Activated CD4-positive, alpha-beta T cell treated with anti-CD3 and anti-CD28 coated beads, Interleukin-2, amount 10 ng/mL, durations not matched to agents 24 days and 14 days (primary cell): ENCODE measurements at regions of chr19 and their contacts with region 1.

Region 1: DNA sequence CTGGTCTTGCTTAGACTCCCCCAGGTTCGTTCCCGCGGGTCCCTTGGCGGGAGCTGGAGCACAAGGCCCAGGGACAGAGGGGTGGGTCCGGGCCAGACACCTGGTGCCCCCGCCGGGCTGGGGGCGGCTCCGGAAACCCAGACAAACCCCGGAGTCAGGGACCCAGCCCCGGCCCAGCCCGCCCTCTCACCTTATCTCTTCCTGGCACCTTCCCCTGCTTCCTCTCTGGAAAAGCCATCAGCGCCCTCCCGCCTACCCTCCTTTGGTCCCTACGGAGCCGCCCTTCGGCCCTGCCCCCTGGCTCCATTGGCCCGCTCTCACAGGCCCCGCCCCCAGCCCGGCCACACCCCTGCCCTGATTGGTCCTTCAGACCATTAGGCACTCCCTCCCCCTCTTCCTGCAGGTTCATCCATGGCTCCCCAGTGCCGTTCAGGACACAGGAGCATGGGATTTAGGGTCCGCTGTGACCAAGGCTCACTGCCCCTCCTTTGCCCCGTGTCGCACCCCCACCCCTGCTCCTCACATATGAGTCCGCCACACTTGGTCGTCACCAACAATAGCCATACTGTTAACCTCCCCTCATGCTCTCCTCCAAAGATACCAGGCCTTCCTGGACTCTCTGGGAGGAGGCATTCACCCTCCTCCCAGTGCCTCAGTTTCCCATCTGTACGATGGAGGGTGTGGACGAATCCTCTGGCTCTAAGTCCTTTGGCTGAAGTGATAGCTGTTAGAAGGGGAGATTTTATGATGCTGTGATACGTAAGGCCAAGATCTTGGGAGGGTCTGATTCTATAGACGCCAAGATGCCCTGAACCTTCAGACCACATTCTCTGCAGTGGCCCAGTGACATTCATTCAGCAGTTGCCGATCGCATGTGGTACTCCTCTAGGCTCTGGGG is 15.1 kb upstream of the NOP53 start:
- DNase-seq: peak; percentile 88
- H3K4me3 Mint-ChIP-seq: peak overlapping the region; percentile 91
- H3K27ac Mint-ChIP-seq: peak overlapping the region; percentile 78
- H3K4me1 Mint-ChIP-seq: peaks cover 21% of the 10 kb centered on the region
- H3K27me3 Mint-ChIP-seq: peaks cover 1% of the 10 kb centered on the region

Region 2: GRCh38 chr19:47512183-47512947 is 217.9 kb before region 1 on chr19:
- intact Hi-C with region 1: no loop called
- DNase-seq: peak; percentile 79
- H3K4me3 Mint-ChIP-seq: peak overlapping the region; percentile 99
- H3K27ac Mint-ChIP-seq: peak overlapping the region; percentile 79
- H3K4me1 Mint-ChIP-seq: peaks cover 65% of the 10 kb centered on the region
- H3K27me3 Mint-ChIP-seq: no peaks in the 10 kb centered on the region

Region 3: DNA sequence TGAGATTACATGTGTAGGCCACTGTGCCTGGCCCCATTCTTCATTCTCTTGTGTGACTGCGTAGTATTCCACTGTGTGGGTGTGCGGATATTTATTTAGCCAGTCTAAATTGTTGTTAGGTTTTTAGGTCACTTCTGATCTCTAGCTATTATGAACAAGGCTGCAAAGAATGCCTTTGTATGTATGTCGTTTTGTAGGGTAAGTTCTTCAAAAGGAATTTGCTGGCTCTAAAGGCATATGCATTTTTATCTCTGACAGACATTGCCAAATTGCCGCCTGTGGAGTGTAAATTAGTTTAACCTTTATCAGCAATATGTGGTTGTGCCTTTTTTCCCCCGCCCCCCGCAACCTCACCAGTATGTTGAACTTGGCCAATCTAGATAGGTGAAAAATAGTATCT is 47.3 kb before region 1 on chr19:
- intact Hi-C with region 1: no loop called
- DNase-seq: no peak
- H3K4me3 Mint-ChIP-seq: no peak overlapping the region
- H3K27ac Mint-ChIP-seq: peak overlapping the region; percentile 34
- H3K4me1 Mint-ChIP-seq: no peaks in the 10 kb centered on the region
- H3K27me3 Mint-ChIP-seq: no peaks in the 10 kb centered on the region

Region 4: GRCh38 chr19:47742634-47743033 is 12.4 kb after region 1 on chr19:
- intact Hi-C with region 1: loop called (anchors 2 kb)
- DNase-seq: no peak
- H3K4me3 Mint-ChIP-seq: peak overlapping the region; percentile 91
- H3K27ac Mint-ChIP-seq: peak overlapping the region; percentile 94
- H3K4me1 Mint-ChIP-seq: peaks cover 20% of the 10 kb centered on the region
- H3K27me3 Mint-ChIP-seq: peaks cover 2% of the 10 kb centered on the region